T-cell (primary cell): ENCODE measurements at regions of chr3 and their contacts with region 1.

Region 1: GRCh38 chr3:111668912-111669488 is 73.9 kb upstream of the ZBED2 start:
- DNase-seq: peak in 1 of 35 experiments; percentile 70
- ATAC-seq: peak in 3 of 4 experiments; percentile 35 to 59 (median 36)
- H3K4me3 ChIP-seq: no peak overlapping the region
- H3K4me3 Mint-ChIP-seq: peak overlapping the region in 1 of 3 donors; percentile 22
- H3K27ac ChIP-seq: no peak overlapping the region
- H3K27ac Mint-ChIP-seq: peak overlapping the region; percentile 84 to 86
- H3K4me1 ChIP-seq: peaks cover 45 to 58% of the 10 kb centered on the region in 2 experiments
- H3K4me1 Mint-ChIP-seq: peaks cover 70 to 76% (median 70%) of the 10 kb centered on the region in 3 donors
- H3K27me3 ChIP-seq: no peaks in the 10 kb centered on the region
- H3K27me3 Mint-ChIP-seq: no peaks in the 10 kb centered on the region

Region 2: GRCh38 chr3:111506435-111506834 is 162.6 kb before region 1 on chr3:
- CTCF ChIA-PET with region 1: no interaction called
- POLR2A ChIA-PET with region 1: no interaction called
- DNase-seq: no peak
- ATAC-seq: no peak
- H3K4me3 ChIP-seq: no peak overlapping the region
- H3K4me3 Mint-ChIP-seq: no peak overlapping the region
- H3K27ac ChIP-seq: no peak overlapping the region
- H3K27ac Mint-ChIP-seq: no peak overlapping the region
- H3K4me1 ChIP-seq: no peaks in the 10 kb centered on the region
- H3K4me1 Mint-ChIP-seq: peaks cover 0 to 2% (median 0%) of the 10 kb centered on the region in 3 donors
- H3K27me3 ChIP-seq: no peaks in the 10 kb centered on the region
- H3K27me3 Mint-ChIP-seq: no peaks in the 10 kb centered on the region

Region 3: GRCh38 chr3:111681661-111682426 is 12.8 kb after region 1 on chr3:
- CTCF ChIA-PET with region 1: interaction called, 9 to 13 read pairs
- POLR2A ChIA-PET with region 1: no interaction called
- DNase-seq: no peak
- ATAC-seq: no peak
- H3K4me3 ChIP-seq: no peak overlapping the region
- H3K4me3 Mint-ChIP-seq: no peak overlapping the region
- H3K27ac ChIP-seq: no peak overlapping the region
- H3K27ac Mint-ChIP-seq: no peak overlapping the region
- H3K4me1 ChIP-seq: peaks cover 10 to 18% of the 10 kb centered on the region in 2 experiments
- H3K4me1 Mint-ChIP-seq: peaks cover 58 to 76% (median 76%) of the 10 kb centered on the region in 3 donors
- H3K27me3 ChIP-seq: no peaks in the 10 kb centered on the region
- H3K27me3 Mint-ChIP-seq: no peaks in the 10 kb centered on the region

Region 4: DNA sequence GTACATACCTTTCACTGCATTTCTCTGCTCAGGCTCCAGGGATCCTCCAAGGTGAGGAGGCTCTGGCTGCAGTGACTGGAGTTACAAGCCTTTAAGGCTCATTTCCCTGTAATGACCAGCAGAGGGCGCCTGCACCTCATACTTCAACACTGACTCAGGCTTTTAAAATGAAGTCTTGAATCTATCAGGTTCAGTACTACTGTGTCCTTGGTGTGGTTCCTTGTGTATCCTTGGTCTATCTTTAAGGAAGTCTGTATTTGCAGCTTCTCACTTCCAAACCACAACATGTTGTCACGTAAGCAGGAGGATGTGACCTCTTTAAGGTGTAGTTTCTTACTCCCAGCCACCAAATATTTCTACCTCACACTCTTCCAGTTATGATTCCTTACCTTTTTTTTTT is 48.6 kb after region 1 on chr3:
- CTCF ChIA-PET with region 1: interaction called, 62 to 69 read pairs
- POLR2A ChIA-PET with region 1: no interaction called
- DNase-seq: peak; percentile 39 to 84 (median 56)
- ATAC-seq: peak; percentile 87 to 89 (median 88)
- H3K4me3 ChIP-seq: no peak overlapping the region
- H3K4me3 Mint-ChIP-seq: no peak overlapping the region
- H3K27ac ChIP-seq: no peak overlapping the region
- H3K27ac Mint-ChIP-seq: peak overlapping the region; percentile 36 to 85
- H3K4me1 ChIP-seq: peaks cover 0 to 4% of the 10 kb centered on the region in 2 experiments
- H3K4me1 Mint-ChIP-seq: peaks cover 0 to 10% (median 4%) of the 10 kb centered on the region in 3 donors
- H3K27me3 ChIP-seq: no peaks in the 10 kb centered on the region
- H3K27me3 Mint-ChIP-seq: no peaks in the 10 kb centered on the region

Region 5: GRCh38 chr3:111967651-111968274 is 298.8 kb after region 1 on chr3:
- CTCF ChIA-PET with region 1: interaction called, 19 to 20 read pairs
- POLR2A ChIA-PET with region 1: interaction called in 1 of 2 experiments, 4 read pairs
- DNase-seq: peak; percentile 38 to 87 (median 68)
- ATAC-seq: peak; percentile 75 to 85 (median 82)
- H3K4me3 ChIP-seq: no peak overlapping the region
- H3K4me3 Mint-ChIP-seq: no peak overlapping the region
- H3K27ac ChIP-seq: no peak overlapping the region
- H3K27ac Mint-ChIP-seq: no peak overlapping the region
- H3K4me1 ChIP-seq: no peaks in the 10 kb centered on the region
- H3K4me1 Mint-ChIP-seq: peaks cover 3 to 11% (median 10%) of the 10 kb centered on the region in 3 donors
- H3K27me3 ChIP-seq: no peaks in the 10 kb centered on the region
- H3K27me3 Mint-ChIP-seq: no peaks in the 10 kb centered on the region

Region 6: GRCh38 chr3:112013058-112013783 is 344.2 kb after region 1 on chr3:
- CTCF ChIA-PET with region 1: interaction called, 3 to 19 read pairs
- POLR2A ChIA-PET with region 1: no interaction called
- DNase-seq: peak in 34 of 35 experiments; percentile 4 to 74 (median 41)
- ATAC-seq: peak; percentile 75 to 83 (median 78)
- H3K4me3 ChIP-seq: no peak overlapping the region
- H3K4me3 Mint-ChIP-seq: no peak overlapping the region
- H3K27ac ChIP-seq: no peak overlapping the region
- H3K27ac Mint-ChIP-seq: no peak overlapping the region
- H3K4me1 ChIP-seq: peaks cover 0 to 6% of the 10 kb centered on the region in 2 experiments
- H3K4me1 Mint-ChIP-seq: peaks cover 0 to 12% (median 7%) of the 10 kb centered on the region in 3 donors
- H3K27me3 ChIP-seq: no peaks in the 10 kb centered on the region
- H3K27me3 Mint-ChIP-seq: no peaks in the 10 kb centered on the region